Activated CD8-positive, alpha-beta T cell treated with anti-CD3 and anti-CD28 coated beads for 36 hours (primary cell): ENCODE measurements at regions of chr18 and their contacts with region 1.

Region 1: DNA sequence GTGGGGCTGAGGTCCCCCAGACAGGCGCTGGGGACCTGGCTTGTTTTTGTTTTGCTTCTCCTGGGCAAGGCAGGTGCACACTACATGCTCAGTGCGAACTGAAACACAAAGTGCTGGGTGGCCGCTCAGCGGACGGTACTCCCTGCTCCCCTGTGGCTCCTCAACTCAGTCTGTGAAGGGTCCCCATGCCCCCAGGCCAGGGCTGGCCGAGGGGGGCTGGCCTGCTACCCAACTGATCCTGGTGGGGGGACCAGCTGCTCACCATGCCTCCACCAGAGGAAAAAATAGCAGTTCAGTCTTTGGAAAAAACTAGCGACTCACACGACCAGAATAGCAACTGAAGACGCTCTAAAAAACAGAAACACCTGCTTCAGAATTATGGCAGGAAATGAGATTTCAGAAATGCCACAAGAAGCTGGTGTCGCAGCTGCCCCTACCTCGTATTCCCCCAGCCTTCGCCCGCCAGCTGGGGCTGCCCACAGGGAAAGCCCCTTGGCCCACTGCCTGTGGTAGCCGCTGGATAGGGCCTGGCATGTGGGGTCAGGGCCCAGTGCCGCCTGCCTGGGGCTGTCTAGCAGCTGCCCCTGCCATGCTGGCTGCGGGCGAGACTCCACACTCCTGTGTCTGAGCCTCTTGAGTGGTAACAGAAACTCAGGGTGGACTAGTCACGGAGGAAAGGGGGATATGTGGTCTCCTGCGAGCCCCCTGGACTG is 43.7 kb downstream of the MEX3C start:
- DNase-seq: peak; percentile 78
- ATAC-seq: peak; percentile 50
- H3K4me3 Mint-ChIP-seq: peak overlapping the region; percentile 75
- H3K27ac Mint-ChIP-seq: peak overlapping the region; percentile 99
- H3K4me1 Mint-ChIP-seq: peaks cover 50% of the 10 kb centered on the region
- H3K27me3 Mint-ChIP-seq: no peaks in the 10 kb centered on the region
- CTCF ChIP-seq: no peak

Region 2: GRCh38 chr18:50590593-50590992 is 563.2 kb before region 1 on chr18:
- CTCF ChIA-PET with region 1: no interaction called
- POLR2A ChIA-PET with region 1: no interaction called
- intact Hi-C with region 1: no loop called
- DNase-seq: no peak
- ATAC-seq: no peak
- H3K4me3 Mint-ChIP-seq: no peak overlapping the region
- H3K27ac Mint-ChIP-seq: no peak overlapping the region
- H3K4me1 Mint-ChIP-seq: no peaks in the 10 kb centered on the region
- H3K27me3 Mint-ChIP-seq: peaks cover 2% of the 10 kb centered on the region
- CTCF ChIP-seq: no peak

Region 3: GRCh38 chr18:50866765-50867164 is 287.1 kb before region 1 on chr18:
- CTCF ChIA-PET with region 1: no interaction called
- POLR2A ChIA-PET with region 1: no interaction called
- intact Hi-C with region 1: no loop called
- DNase-seq: no peak
- ATAC-seq: no peak
- H3K4me3 Mint-ChIP-seq: no peak overlapping the region
- H3K27ac Mint-ChIP-seq: no peak overlapping the region
- H3K4me1 Mint-ChIP-seq: no peaks in the 10 kb centered on the region
- H3K27me3 Mint-ChIP-seq: peaks cover under 1% of the 10 kb centered on the region
- CTCF ChIP-seq: no peak

Region 4: DNA sequence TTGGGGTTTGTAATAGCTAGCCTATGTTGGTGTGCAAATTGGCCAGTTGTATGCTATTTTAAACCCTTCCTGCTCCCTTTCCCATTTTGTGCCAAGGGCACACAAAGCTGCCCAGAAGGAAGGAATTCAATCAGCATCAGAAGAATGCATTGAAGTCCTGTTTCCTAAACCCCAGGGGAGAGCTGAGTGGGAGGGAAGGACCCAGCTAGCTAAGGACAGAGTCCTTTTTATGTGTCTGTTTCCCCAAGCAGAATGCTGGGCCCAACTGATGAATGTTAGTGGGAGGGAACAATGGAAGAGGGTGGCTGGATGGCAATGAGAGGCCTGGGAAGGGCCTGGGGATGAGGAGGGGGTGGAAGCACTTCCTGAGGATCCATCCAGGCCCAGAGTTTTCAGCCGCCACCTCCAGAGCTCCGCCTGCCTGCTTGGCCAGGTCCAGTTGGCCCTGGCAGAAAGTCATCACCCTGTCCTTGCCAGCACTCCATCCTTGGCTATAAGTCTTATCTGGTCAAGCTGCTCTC is 11.0 kb after region 1 on chr18:
- CTCF ChIA-PET with region 1: interaction called, 4 read pairs
- POLR2A ChIA-PET with region 1: interaction called, 25 read pairs
- intact Hi-C with region 1: loop called (anchors 2 kb)
- DNase-seq: no peak
- ATAC-seq: no peak
- H3K4me3 Mint-ChIP-seq: no peak overlapping the region
- H3K27ac Mint-ChIP-seq: no peak overlapping the region
- H3K4me1 Mint-ChIP-seq: peaks cover 47% of the 10 kb centered on the region
- H3K27me3 Mint-ChIP-seq: no peaks in the 10 kb centered on the region
- CTCF ChIP-seq: no peak

Region 5: GRCh38 chr18:51171223-51171622 is 17.4 kb after region 1 on chr18:
- CTCF ChIA-PET with region 1: interaction called, 4 read pairs
- POLR2A ChIA-PET with region 1: interaction called, 4 read pairs
- intact Hi-C with region 1: loop called (anchors 2 kb)
- DNase-seq: no peak
- ATAC-seq: peak; percentile 82
- H3K4me3 Mint-ChIP-seq: peak overlapping the region; percentile 55
- H3K27ac Mint-ChIP-seq: peak overlapping the region; percentile 97
- H3K4me1 Mint-ChIP-seq: peaks cover 65% of the 10 kb centered on the region
- H3K27me3 Mint-ChIP-seq: no peaks in the 10 kb centered on the region
- CTCF ChIP-seq: no peak

Region 6: GRCh38 chr18:51188024-51188701 is 34.3 kb after region 1 on chr18:
- CTCF ChIA-PET with region 1: interaction called, 3 read pairs
- POLR2A ChIA-PET with region 1: interaction called, 10 read pairs
- intact Hi-C with region 1: no loop called
- DNase-seq: no peak
- ATAC-seq: peak; percentile 39
- H3K4me3 Mint-ChIP-seq: peak overlapping the region; percentile 43
- H3K27ac Mint-ChIP-seq: peak overlapping the region; percentile 70
- H3K4me1 Mint-ChIP-seq: peaks cover 76% of the 10 kb centered on the region
- H3K27me3 Mint-ChIP-seq: no peaks in the 10 kb centered on the region
- CTCF ChIP-seq: no peak

Region 7: GRCh38 chr18:51197661-51198424 is 44.0 kb after region 1 on chr18 and contains the start of gene MEX3C:
- CTCF ChIA-PET with region 1: interaction called, 6 read pairs
- POLR2A ChIA-PET with region 1: interaction called, 39 read pairs
- intact Hi-C with region 1: loop called (anchors 2 kb)
- DNase-seq: peak; percentile 100
- ATAC-seq: peak; percentile 85
- H3K4me3 Mint-ChIP-seq: peak within 1 kb of the TSS; percentile 85
- H3K27ac Mint-ChIP-seq: peak within 1 kb of the TSS; percentile 97
- H3K4me1 Mint-ChIP-seq: peaks cover 18% of the 10 kb centered on the region
- H3K27me3 Mint-ChIP-seq: no peaks in the 10 kb centered on the region
- CTCF ChIP-seq: no peak
- total RNA-seq, gene MEX3C: 51.5 to 52.6 TPM

Region 8: GRCh38 chr18:51461956-51462355 is 308.1 kb after region 1 on chr18:
- CTCF ChIA-PET with region 1: no interaction called
- POLR2A ChIA-PET with region 1: no interaction called
- intact Hi-C with region 1: no loop called
- DNase-seq: no peak
- ATAC-seq: no peak
- H3K4me3 Mint-ChIP-seq: no peak overlapping the region
- H3K27ac Mint-ChIP-seq: no peak overlapping the region
- H3K4me1 Mint-ChIP-seq: no peaks in the 10 kb centered on the region
- H3K27me3 Mint-ChIP-seq: peaks cover 9% of the 10 kb centered on the region
- CTCF ChIP-seq: no peak